ENCODE measurements at regions of chr9 and their contacts with region 1.

Region 1: DNA sequence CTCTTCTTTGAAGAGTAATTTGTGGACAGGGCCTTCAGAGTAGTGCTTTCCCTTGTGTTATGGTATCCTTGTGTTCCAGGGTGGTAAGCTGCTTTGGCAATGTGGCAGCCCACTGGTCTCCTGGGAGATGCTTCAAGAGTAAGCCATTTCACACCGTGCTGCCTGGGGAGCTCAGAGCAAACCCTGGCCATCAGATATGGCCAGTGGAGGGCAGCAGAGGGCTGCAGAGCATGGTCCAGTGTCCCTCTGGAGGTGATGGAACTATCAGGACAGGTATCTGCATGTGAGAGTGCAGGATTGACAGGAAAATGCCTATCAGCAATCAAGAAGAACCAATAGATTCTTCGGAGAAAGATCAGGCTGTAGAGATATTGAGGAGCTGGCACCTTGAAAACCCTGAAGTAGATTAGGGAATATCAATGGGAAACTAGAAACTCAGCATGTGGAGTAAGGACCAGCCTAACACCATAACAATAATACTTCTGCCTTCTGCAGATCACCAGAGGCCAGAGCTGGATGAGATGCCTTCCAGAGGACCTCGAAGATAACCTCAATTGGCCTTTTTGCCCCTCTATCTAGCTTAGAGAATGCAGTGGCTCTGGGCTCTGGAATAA is 90.8 kb downstream of the PLPPR1 start:
- DNase-seq: peak; percentile 85
- ATAC-seq: peak; percentile 96
- H3K4me3 Mint-ChIP-seq: no peak overlapping the region
- H3K27ac Mint-ChIP-seq: no peak overlapping the region
- H3K4me1 Mint-ChIP-seq: peaks cover 20% of the 10 kb centered on the region
- H3K27me3 Mint-ChIP-seq: peaks cover 2% of the 10 kb centered on the region; the same call in 1 of the 2 replicates
- CTCF ChIP-seq: peak; percentile 85

Region 2: DNA sequence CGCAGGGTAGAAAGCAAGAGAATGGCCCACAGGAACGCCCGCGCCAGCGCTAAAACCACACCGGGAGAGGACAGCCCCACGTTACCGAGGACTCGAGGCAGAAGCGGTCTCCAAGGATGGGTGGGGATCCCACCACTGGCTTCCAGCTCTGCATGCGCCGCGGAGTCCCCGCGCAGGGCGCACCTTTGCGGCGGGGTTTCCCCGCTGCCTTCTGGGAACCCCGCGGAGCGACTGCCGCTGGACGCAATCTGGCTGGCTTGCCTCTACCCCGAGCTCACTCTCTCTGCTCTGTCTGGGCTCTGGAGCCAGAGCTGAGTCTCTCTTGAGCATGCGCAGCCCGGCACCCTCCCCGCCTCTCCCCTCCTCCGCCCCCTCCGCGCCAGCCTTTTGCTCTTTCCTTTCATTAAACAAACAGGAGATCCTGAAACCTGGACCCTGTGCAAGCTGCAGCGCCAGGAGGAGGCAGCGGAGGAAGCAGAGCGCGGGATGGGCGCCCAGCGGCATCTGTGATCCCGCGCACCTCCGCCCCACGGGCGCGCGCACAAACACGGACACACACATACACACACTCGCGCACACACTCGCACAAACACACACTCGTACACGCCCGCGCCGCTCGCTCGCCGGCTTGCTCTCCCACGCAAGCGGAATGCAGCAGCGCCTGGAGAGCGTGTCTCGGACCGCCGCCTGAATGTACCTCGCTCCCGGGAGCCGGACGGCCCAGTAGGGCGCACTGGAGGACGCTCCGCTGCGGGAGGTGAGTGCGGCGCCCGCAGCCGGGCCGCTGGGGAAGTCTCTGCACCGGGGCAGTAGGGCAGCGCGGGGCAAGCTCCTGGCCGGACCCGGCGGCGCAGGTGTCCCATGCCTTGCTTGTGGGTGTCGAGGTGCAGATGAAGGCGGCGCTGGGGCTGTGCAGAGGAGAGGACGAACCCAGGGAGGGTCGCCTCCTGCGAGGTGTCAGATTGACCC is 90.7 kb before region 1 on chr9 and contains the start of gene PLPPR1:
- CTCF ChIA-PET with region 1: interaction called, 20 read pairs
- POLR2A ChIA-PET with region 1: interaction called, 3 read pairs
- DNase-seq: peak; percentile 77
- ATAC-seq: peak; percentile 90
- H3K4me3 Mint-ChIP-seq: peak within 1 kb of the TSS; percentile 88
- H3K27ac Mint-ChIP-seq: no peak within 1 kb of the TSS
- H3K4me1 Mint-ChIP-seq: peaks cover 24% of the 10 kb centered on the region
- H3K27me3 Mint-ChIP-seq: peaks cover 72% of the 10 kb centered on the region
- CTCF ChIP-seq: no peak
- total RNA-seq, gene PLPPR1: 0.44 to 1.5 TPM (median 0.71 TPM) in 3 replicates

Region 3: DNA sequence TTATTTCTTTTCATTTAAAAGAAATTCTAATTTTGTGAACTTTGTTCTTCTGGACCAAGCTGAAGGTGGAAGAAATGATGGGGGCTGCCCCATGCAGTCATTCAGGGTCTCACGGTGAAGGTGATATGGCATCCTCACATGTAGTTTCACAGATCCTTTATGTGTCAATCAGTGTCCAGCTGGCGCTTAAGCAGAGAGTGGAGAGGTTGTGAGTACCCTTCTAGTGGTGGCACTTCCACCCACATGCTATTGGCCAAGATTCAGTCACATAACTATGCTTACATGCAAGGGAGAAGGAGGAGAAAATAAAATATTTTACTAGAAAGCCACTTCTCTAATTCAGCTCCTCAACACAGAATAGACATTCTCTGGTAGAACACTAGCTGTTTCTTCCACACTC is 56.1 kb before region 1 on chr9:
- CTCF ChIA-PET with region 1: no interaction called
- POLR2A ChIA-PET with region 1: no interaction called
- DNase-seq: no peak
- ATAC-seq: no peak
- H3K4me3 Mint-ChIP-seq: no peak overlapping the region
- H3K27ac Mint-ChIP-seq: no peak overlapping the region
- H3K4me1 Mint-ChIP-seq: no peaks in the 10 kb centered on the region
- H3K27me3 Mint-ChIP-seq: no peaks in the 10 kb centered on the region
- CTCF ChIP-seq: no peak

Region 4: GRCh38 chr9:101087426-101087825 is 31.9 kb before region 1 on chr9:
- CTCF ChIA-PET with region 1: no interaction called
- POLR2A ChIA-PET with region 1: no interaction called
- DNase-seq: no peak
- ATAC-seq: no peak
- H3K4me3 Mint-ChIP-seq: no peak overlapping the region
- H3K27ac Mint-ChIP-seq: 0 out of 2 replicates have a peak overlapping the region, but pooled peaks have one; percentile 20
- H3K4me1 Mint-ChIP-seq: peaks cover 38% of the 10 kb centered on the region
- H3K27me3 Mint-ChIP-seq: no peaks in the 10 kb centered on the region; the same call in 1 of the 2 replicates
- CTCF ChIP-seq: no peak

Region 5: DNA sequence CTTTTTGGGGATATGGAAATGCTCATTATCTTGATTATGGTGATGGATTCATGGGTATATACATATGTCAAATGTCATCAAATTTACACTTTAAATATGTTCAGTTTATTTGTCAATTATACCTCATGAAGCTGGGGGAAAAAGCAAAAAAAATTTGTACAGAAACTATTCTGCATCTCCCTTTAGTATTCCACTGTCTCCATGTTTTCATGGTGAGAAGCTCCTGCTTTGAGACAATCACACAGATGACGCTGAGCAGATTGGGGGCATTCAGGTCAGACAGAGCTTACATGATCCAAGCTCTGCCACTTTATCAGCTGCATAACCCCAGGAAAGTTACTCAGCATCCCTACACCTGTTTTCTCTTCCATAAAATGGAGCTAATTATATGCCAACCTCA is 10.7 kb after region 1 on chr9:
- CTCF ChIA-PET with region 1: interaction called, 12 read pairs
- POLR2A ChIA-PET with region 1: no interaction called
- DNase-seq: no peak
- ATAC-seq: no peak
- H3K4me3 Mint-ChIP-seq: no peak overlapping the region
- H3K27ac Mint-ChIP-seq: no peak overlapping the region
- H3K4me1 Mint-ChIP-seq: peaks cover 6% of the 10 kb centered on the region
- H3K27me3 Mint-ChIP-seq: no peaks in the 10 kb centered on the region; the same call in none of the 2 replicates
- CTCF ChIP-seq: no peak

Region 6: DNA sequence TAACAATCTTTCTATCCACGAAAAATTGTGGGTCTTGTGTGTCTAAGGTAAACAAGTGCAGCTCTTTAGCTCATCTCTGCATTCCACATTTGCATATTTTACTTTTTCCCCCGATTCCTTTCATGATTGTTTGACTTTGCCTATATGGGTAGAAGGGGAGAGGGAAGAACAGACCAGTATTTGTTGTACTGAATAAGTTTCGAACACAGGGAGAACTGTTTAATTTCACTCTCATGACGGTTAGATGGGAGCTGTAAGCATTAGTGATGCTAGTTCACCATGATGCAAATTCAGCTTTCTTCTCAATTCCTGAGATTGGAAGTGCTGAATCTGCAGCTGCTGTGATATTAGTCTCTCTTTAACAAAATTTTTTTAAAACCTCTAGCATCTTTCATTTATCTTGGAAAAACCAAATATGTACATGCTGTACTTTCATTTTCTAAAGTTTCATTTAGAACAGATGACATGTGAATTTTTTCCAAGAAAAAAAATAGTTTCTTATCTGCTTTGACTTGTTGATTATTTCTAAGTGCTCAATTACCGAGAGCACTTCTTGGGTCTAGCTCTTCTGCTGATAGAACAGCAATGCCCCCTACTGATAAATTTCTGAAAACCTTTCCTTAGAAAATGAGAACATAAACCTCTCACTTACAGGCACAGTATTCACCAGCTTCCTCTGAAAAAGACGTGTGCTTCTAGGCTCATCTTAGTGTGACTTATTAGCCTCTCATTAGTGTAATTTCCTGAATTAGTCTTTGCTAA is 116.0 kb after region 1 on chr9:
- CTCF ChIA-PET with region 1: interaction called, 46 read pairs
- POLR2A ChIA-PET with region 1: no interaction called
- DNase-seq: no peak
- ATAC-seq: peak; percentile 89
- H3K4me3 Mint-ChIP-seq: no peak overlapping the region
- H3K27ac Mint-ChIP-seq: peak overlapping the region; percentile 35
- H3K4me1 Mint-ChIP-seq: peaks cover 47% of the 10 kb centered on the region
- H3K27me3 Mint-ChIP-seq: no peaks in the 10 kb centered on the region
- CTCF ChIP-seq: peak; percentile 32; the same call in 1 of the 2 replicates